Spleen (tissue), 13 donors: ENCODE measurements at regions of chr19 and their contacts with region 1.

Region 1: GRCh38 chr19:38707512-38708114 is 36.7 kb downstream of the CAPN12 start:
- DNase-seq: peak; percentile 88
- H3K4me3 ChIP-seq: no peak overlapping the region
- H3K27ac ChIP-seq: peak overlapping the region; percentile 49 to 88 (median 78)
- H3K4me1 ChIP-seq: peaks cover 46 to 100% (median 83%) of the 10 kb centered on the region in 6 donors
- H3K27me3 ChIP-seq: no peaks in the 10 kb centered on the region
- CTCF ChIP-seq: no peak
- POLR2A ChIP-seq: no peak

Region 2: DNA sequence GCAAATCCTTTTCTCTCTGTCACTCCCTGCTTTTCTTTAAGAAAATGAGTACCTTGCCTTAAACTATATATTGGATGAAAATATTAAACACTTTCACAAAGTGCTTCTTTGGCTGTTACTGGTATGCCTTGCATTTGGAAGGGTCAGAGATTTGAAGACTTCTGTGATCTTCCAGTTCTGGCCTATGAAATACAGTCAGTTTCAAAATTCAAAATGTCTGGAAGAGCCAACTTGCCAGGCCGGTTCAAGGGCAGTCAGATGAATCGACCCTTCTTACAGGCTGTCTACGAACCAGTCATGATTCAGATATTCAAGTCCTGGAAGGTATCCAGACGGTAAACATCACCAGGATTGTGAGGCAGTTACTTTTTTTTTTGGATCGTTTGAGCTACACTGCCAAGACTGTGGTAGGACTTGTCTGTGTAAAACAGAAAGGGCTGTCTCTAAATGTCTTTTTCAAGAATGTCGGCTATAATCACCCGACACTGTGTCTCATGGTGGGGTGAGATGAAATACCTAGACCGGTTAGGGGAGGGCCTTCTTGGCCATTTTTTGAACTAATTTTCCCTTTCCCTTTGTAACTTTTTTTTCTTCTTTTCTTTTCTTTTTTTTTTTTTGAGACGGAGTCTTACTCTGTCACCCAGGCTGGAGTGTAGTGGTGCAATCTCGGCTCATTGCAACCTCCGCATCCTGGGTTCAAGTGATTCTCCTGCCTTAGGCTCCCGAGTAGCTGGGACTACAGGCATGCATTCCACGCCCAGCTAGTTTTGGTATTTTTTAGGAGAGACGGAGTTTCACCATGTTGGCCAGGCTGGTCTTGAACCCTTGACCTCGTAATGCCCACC is 48.9 kb before region 1 on chr19:
- intact Hi-C with region 1: loop called (anchors 10 kb)
- DNase-seq: no peak
- H3K4me3 ChIP-seq: peak overlapping the region in 1 of 8 donors; percentile 4
- H3K27ac ChIP-seq: peak overlapping the region; percentile 35 to 94 (median 92)
- H3K4me1 ChIP-seq: peaks cover 74 to 100% (median 98%) of the 10 kb centered on the region in 6 donors
- H3K27me3 ChIP-seq: no peaks in the 10 kb centered on the region
- CTCF ChIP-seq: no peak
- POLR2A ChIP-seq: no peak

Region 3: DNA sequence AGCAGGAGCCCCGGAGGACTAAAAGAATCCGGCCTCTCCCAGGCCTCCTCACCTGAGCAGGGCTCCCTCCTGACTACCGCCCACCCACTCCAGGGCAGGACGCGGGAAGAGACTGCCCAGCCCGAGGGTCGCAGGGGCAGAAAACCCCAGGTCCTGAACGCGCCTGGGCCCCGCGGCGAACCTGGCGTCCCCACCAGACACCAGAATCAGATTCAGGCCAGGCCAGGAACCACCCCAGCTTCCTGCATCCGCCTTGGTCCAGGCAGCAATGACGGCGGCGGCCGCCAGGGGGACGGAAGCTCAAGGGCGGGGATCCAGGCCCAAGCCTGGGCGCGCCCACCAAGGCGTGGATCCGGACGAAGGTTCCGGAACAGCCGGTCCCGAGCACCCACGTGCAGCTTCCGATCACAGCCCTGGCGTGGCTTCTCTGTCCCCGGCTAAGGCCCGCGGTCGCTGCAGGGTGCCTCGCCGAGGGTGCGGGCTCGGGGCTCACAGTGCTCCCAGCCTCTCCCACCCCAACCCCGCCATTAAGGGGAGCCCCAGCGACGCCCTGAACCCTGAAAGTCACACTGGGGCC is 62.1 kb after region 1 on chr19:
- intact Hi-C with region 1: no loop called
- DNase-seq: peak; percentile 99
- H3K4me3 ChIP-seq: peak overlapping the region; percentile 23 to 68 (median 39)
- H3K27ac ChIP-seq: peak overlapping the region; percentile 63 to 89 (median 83)
- H3K4me1 ChIP-seq: peaks cover 0 to 20% (median 12%) of the 10 kb centered on the region in 6 donors
- H3K27me3 ChIP-seq: no peaks in the 10 kb centered on the region
- CTCF ChIP-seq: peak; percentile 92 to 99 (median 98)
- POLR2A ChIP-seq: no peak